CD8-positive, alpha-beta T cell (primary cell): ENCODE measurements at regions of chr18 and their contacts with region 1.

Region 1: GRCh38 chr18:32470713-32471633 is at the start of gene GAREM1:
- DNase-seq: peak; percentile 50 to 88 (median 77)
- ATAC-seq: peak; percentile 95
- H3K4me3 ChIP-seq: peak within 1 kb of the TSS; percentile 46 to 57
- H3K4me3 Mint-ChIP-seq: peak within 1 kb of the TSS; percentile 80
- H3K27ac ChIP-seq: no peak within 1 kb of the TSS
- H3K27ac Mint-ChIP-seq: no peak within 1 kb of the TSS
- H3K4me1 ChIP-seq: peaks cover 21% of the 10 kb centered on the region
- H3K4me1 Mint-ChIP-seq: peaks cover 28% of the 10 kb centered on the region
- H3K27me3 ChIP-seq: peaks cover 0 to 5% of the 10 kb centered on the region in 2 experiments
- H3K27me3 Mint-ChIP-seq: peaks cover 37% of the 10 kb centered on the region
- CTCF ChIP-seq: no peak
- total RNA-seq, gene GAREM1: 0.16 to 0.25 TPM

Region 2: GRCh38 chr18:31942999-31943865 is 527.7 kb before region 1 on chr18 and contains the start of gene TRAPPC8:
- CTCF ChIA-PET with region 1: no interaction called
- POLR2A ChIA-PET with region 1: no interaction called
- intact Hi-C with region 1: loop called (anchors 5 to 10 kb)
- DNase-seq: peak; percentile 80 to 97 (median 90)
- ATAC-seq: peak; percentile 87
- H3K4me3 ChIP-seq: peak within 1 kb of the TSS; percentile 97 to 98
- H3K4me3 Mint-ChIP-seq: peak within 1 kb of the TSS; percentile 99
- H3K27ac ChIP-seq: peak within 1 kb of the TSS; percentile 90 to 98
- H3K27ac Mint-ChIP-seq: peak within 1 kb of the TSS; percentile 98
- H3K4me1 ChIP-seq: peaks cover 25% of the 10 kb centered on the region
- H3K4me1 Mint-ChIP-seq: peaks cover 46% of the 10 kb centered on the region
- H3K27me3 ChIP-seq: no peaks in the 10 kb centered on the region
- H3K27me3 Mint-ChIP-seq: no peaks in the 10 kb centered on the region
- CTCF ChIP-seq: no peak
- total RNA-seq, gene TRAPPC8: 23.6 to 24.9 TPM

Region 3: GRCh38 chr18:32092422-32093101 is 378.4 kb before region 1 on chr18:
- CTCF ChIA-PET with region 1: no interaction called
- POLR2A ChIA-PET with region 1: no interaction called
- intact Hi-C with region 1: loop called in 1 of 2 experiments (anchors 5 kb)
- DNase-seq: peak; percentile 99 to 100 (median 100)
- ATAC-seq: peak; percentile 90
- H3K4me3 ChIP-seq: peak overlapping the region; percentile 90 to 95
- H3K4me3 Mint-ChIP-seq: peak overlapping the region; percentile 99
- H3K27ac ChIP-seq: peak overlapping the region; percentile 94 to 99
- H3K27ac Mint-ChIP-seq: peak overlapping the region; percentile 98
- H3K4me1 ChIP-seq: peaks cover 33% of the 10 kb centered on the region
- H3K4me1 Mint-ChIP-seq: peaks cover 49% of the 10 kb centered on the region
- H3K27me3 ChIP-seq: no peaks in the 10 kb centered on the region
- H3K27me3 Mint-ChIP-seq: no peaks in the 10 kb centered on the region
- CTCF ChIP-seq: no peak

Region 4: DNA sequence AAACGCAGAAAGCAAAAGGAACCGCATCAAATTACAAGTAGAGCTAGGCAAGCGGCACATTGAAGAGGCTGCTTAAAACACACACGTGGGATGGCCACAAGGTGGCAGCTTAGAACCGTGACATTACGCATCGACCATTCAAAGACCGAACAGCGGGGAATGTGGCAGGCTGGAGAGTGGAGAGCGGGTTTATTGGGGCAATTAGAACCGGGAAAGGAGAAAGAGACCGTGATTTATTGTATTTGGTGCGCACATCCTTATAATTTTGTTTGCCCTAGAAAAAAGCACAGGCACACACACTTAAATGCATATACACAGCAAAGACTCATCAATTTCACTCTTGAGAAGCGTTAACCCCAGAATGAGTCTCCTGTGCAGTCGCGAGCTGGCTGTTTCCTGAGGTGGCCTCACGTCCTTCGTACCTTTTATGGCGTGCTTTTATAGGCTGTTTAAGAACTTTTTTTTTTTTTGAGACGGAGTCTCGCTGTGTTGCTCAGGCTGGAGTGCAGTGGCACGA is 312.8 kb before region 1 on chr18:
- CTCF ChIA-PET with region 1: interaction called, 6 read pairs
- POLR2A ChIA-PET with region 1: no interaction called
- intact Hi-C with region 1: loop called (anchors 1 to 5 kb)
- DNase-seq: peak; percentile 46 to 86 (median 69)
- ATAC-seq: peak; percentile 93
- H3K4me3 ChIP-seq: peak overlapping the region; percentile 30 to 34
- H3K4me3 Mint-ChIP-seq: peak overlapping the region; percentile 75
- H3K27ac ChIP-seq: no peak overlapping the region
- H3K27ac Mint-ChIP-seq: no peak overlapping the region
- H3K4me1 ChIP-seq: no peaks in the 10 kb centered on the region
- H3K4me1 Mint-ChIP-seq: peaks cover 6% of the 10 kb centered on the region
- H3K27me3 ChIP-seq: peaks cover 0 to 4% of the 10 kb centered on the region in 2 experiments
- H3K27me3 Mint-ChIP-seq: peaks cover 4% of the 10 kb centered on the region
- CTCF ChIP-seq: peak; percentile 81

Region 5: DNA sequence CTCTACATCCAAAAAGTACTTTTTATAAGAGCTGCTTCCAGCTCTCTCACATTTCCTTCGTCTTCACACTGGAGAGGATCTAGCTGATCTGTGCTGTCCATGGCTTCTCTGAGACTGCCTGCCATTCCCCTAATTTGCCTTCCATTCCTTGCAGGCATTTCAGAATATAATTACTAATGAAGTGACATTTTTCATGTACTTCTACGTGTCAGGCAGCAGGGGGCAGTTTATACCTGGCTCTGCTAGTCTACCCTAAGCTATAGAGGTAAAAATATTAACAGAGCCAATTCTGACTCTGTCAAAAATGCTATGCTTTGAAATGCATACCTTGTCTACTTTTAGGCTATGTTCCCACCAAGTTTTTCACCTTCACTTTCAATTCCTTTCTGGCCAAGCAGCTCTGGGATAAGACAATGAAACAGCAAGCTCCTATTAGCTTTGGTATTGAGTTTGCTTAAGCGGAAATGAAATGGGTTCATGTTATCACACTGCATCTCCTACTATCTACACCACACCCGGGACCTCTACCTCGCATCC is 199.2 kb before region 1 on chr18:
- CTCF ChIA-PET with region 1: no interaction called
- POLR2A ChIA-PET with region 1: no interaction called
- intact Hi-C with region 1: loop called in 1 of 2 experiments (anchors 10 kb)
- DNase-seq: peak in 2 of 9 experiments; percentile 9 to 27
- ATAC-seq: no peak
- H3K4me3 ChIP-seq: no peak overlapping the region
- H3K4me3 Mint-ChIP-seq: no peak overlapping the region
- H3K27ac ChIP-seq: no peak overlapping the region
- H3K27ac Mint-ChIP-seq: no peak overlapping the region
- H3K4me1 ChIP-seq: no peaks in the 10 kb centered on the region
- H3K4me1 Mint-ChIP-seq: no peaks in the 10 kb centered on the region
- H3K27me3 ChIP-seq: no peaks in the 10 kb centered on the region
- H3K27me3 Mint-ChIP-seq: peaks cover 11% of the 10 kb centered on the region
- CTCF ChIP-seq: peak; percentile 33

Region 6: DNA sequence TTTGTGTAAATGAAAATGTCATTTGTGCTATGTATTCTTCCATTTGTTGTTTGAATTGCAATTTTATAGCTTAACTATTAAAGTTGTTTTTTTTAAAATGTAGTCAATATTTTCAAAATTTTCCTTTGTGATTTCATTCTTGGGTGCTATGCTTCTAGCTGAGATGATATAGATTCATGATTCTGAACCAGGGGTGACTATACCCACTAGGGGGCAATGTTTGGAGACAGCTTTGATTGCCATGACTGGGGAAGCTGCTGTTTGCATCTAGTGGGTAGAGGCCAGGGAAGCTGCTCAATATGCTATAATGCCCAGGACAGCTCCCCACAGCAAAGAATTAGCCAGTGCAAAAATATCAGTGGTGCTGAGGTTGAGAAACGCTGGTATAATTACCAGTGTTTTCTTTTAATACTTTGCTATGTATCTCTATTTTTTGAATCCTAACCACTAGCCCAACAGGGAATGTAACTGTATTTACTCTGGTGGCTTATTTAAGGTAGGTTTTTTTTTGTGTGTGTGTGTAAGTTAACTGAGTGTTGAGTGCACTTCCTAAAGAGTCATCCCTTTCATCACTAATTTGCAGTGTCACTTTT is 181.4 kb before region 1 on chr18:
- CTCF ChIA-PET with region 1: interaction called, 12 read pairs
- POLR2A ChIA-PET with region 1: no interaction called
- intact Hi-C with region 1: no loop called
- DNase-seq: peak in 3 of 9 experiments; percentile 22 to 41 (median 29)
- ATAC-seq: no peak
- H3K4me3 ChIP-seq: no peak overlapping the region
- H3K4me3 Mint-ChIP-seq: no peak overlapping the region
- H3K27ac ChIP-seq: no peak overlapping the region
- H3K27ac Mint-ChIP-seq: no peak overlapping the region
- H3K4me1 ChIP-seq: no peaks in the 10 kb centered on the region
- H3K4me1 Mint-ChIP-seq: no peaks in the 10 kb centered on the region
- H3K27me3 ChIP-seq: no peaks in the 10 kb centered on the region
- H3K27me3 Mint-ChIP-seq: peaks cover 7% of the 10 kb centered on the region
- CTCF ChIP-seq: no peak

Region 7: GRCh38 chr18:32530947-32531651 is 60.1 kb after region 1 on chr18:
- CTCF ChIA-PET with region 1: no interaction called
- POLR2A ChIA-PET with region 1: no interaction called
- intact Hi-C with region 1: loop called in 1 of 2 experiments (anchors 5 kb)
- DNase-seq: peak in 2 of 9 experiments; percentile 34 to 60
- ATAC-seq: peak; percentile 85
- H3K4me3 ChIP-seq: no peak overlapping the region
- H3K4me3 Mint-ChIP-seq: no peak overlapping the region
- H3K27ac ChIP-seq: no peak overlapping the region
- H3K27ac Mint-ChIP-seq: peak overlapping the region; percentile 58
- H3K4me1 ChIP-seq: peaks cover 13% of the 10 kb centered on the region
- H3K4me1 Mint-ChIP-seq: peaks cover 18% of the 10 kb centered on the region
- H3K27me3 ChIP-seq: no peaks in the 10 kb centered on the region
- H3K27me3 Mint-ChIP-seq: no peaks in the 10 kb centered on the region
- CTCF ChIP-seq: no peak

Region 8: DNA sequence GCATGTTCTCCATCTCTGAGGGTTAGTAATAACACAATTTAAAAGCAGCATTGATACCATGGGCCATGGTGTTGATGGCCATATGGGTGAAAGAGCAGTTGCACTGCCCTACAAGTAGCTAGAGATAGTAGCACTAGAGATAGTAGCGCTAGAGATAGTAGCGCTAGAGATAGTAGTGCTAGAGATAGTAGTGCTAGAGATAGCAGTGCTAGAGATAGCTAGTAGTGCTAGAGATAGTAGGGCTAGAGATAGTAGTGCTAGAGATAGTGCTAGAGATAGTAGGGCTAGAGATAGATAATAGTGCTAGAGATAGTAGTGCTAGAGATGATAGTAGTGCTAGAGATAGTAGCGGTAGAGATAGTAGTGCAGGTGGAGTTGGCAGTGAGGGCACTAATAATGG is 341.4 kb after region 1 on chr18:
- CTCF ChIA-PET with region 1: no interaction called
- POLR2A ChIA-PET with region 1: no interaction called
- intact Hi-C with region 1: no loop called
- DNase-seq: no peak
- ATAC-seq: no peak
- H3K4me3 ChIP-seq: no peak overlapping the region
- H3K4me3 Mint-ChIP-seq: no peak overlapping the region
- H3K27ac ChIP-seq: no peak overlapping the region
- H3K27ac Mint-ChIP-seq: no peak overlapping the region
- H3K4me1 ChIP-seq: no peaks in the 10 kb centered on the region
- H3K4me1 Mint-ChIP-seq: no peaks in the 10 kb centered on the region
- H3K27me3 ChIP-seq: no peaks in the 10 kb centered on the region
- H3K27me3 Mint-ChIP-seq: no peaks in the 10 kb centered on the region
- CTCF ChIP-seq: no peak